ENCODE measurements at regions of chr6 and their contacts with region 1.

Region 1: GRCh38 chr6:85323435-85324040 is 126.3 kb upstream of the NT5E start:
- DNase-seq: peak; percentile 25
- ATAC-seq: peak; percentile 93
- H3K4me3 ChIP-seq: no peak overlapping the region
- H3K27ac ChIP-seq: no peak overlapping the region
- H3K4me1 ChIP-seq: no peaks in the 10 kb centered on the region
- H3K27me3 ChIP-seq: no peaks in the 10 kb centered on the region; a peak in 1 of 4 replicates
- CTCF ChIP-seq: peak; percentile 80 to 88 (median 84)
- EP300 ChIP-seq: no peak
- POLR2A ChIP-seq: no peak
- RAD21 ChIP-seq: peak; percentile 92

Region 2: DNA sequence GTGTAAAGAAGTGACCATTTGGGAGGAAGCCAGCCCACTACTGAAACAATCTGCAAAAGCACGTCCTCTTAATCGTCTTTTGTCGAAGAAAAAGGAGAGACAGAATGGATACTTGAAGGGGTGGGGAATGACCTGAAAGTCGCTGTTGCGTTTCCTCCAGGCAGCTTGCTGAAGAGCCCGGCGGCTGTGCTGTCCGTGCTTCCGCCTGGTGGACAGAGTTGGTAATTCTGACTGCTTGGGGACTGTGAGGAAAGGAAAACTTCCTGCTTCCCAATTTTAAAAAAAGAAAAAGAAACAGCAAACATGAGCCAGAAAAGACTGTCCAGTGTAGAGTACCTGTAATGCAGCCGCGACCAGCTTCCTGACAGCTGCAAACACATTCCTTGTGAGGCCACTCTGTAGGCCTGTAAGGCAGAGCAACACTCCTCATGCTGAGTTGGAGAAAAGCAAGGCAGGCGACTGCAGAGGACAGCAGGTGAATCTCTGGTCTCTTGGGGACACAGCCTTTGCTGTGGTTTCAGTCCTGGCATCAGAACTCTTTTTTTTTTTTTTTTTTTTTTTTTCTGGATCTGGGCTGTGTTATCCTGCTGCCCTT is 308.0 kb before region 1 on chr6:
- CTCF ChIA-PET with region 1: no interaction called
- POLR2A ChIA-PET with region 1: no interaction called
- RAD21 ChIA-PET with region 1: no interaction called
- SMC1A ChIA-PET with region 1: no interaction called
- in situ Hi-C with region 1: no loop called
- intact Hi-C with region 1: loop called (anchors 5 kb)
- DNase-seq: no peak
- ATAC-seq: peak; percentile 92
- H3K4me3 ChIP-seq: no peak overlapping the region
- H3K27ac ChIP-seq: no peak overlapping the region
- H3K4me1 ChIP-seq: no peaks in the 10 kb centered on the region
- H3K27me3 ChIP-seq: no peaks in the 10 kb centered on the region
- CTCF ChIP-seq: peak; percentile 42 to 46 (median 46); a peak in 4 of 6 replicates
- EP300 ChIP-seq: no peak
- POLR2A ChIP-seq: no peak
- RAD21 ChIP-seq: 0 out of 2 replicates have a peak, but pooled peaks have one; percentile 35

Region 3: DNA sequence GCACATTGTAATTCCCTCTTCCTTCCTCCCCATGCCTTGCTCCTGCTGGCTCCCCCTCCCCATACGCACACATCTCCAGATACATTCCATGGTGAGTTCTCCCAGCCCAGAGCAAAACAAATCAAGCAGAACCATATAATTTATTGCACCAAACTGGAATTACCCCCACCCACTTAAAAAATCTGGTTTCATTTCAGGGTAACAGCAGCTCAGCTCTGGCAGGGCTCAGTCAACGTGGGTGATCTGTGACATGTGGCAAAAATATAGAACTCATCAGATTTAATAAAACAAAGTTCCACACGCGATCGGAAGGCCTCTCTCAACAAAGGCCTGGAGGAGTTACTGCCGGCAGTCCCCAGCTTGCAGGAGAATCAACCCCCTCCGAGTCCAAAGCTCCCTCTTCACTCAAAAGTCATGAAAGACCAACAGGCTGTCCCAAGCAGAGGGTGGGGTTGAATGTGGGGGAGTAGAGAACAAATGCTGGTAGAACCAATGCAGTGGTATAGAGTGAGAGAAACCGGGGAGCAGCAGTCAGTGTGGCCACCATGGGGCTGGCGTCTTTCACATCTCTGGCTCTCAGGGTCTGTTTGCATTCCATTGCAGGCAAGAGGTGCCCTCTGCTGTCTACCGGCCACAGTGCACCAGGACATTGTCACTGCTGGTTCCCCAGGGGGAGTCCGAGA is 196.9 kb before region 1 on chr6:
- CTCF ChIA-PET with region 1: interaction called, 3 read pairs
- POLR2A ChIA-PET with region 1: no interaction called
- RAD21 ChIA-PET with region 1: no interaction called
- SMC1A ChIA-PET with region 1: interaction called, 4 read pairs
- in situ Hi-C with region 1: no loop called
- intact Hi-C with region 1: loop called (anchors 1 kb)
- DNase-seq: no peak
- ATAC-seq: peak; percentile 97
- H3K4me3 ChIP-seq: no peak overlapping the region
- H3K27ac ChIP-seq: no peak overlapping the region
- H3K4me1 ChIP-seq: no peaks in the 10 kb centered on the region
- H3K27me3 ChIP-seq: no peaks in the 10 kb centered on the region
- CTCF ChIP-seq: peak; percentile 51 to 70 (median 51); a peak in 5 of 6 replicates
- EP300 ChIP-seq: no peak
- POLR2A ChIP-seq: no peak
- RAD21 ChIP-seq: peak; percentile 59

Measured in GM12878 (cell line).